Activated naive CD4-positive, alpha-beta T cell treated with anti-CD3 and anti-CD28 coated beads for 36 hours (primary cell): ENCODE measurements at regions of chr2 and their contacts with region 1.

Region 1: GRCh38 chr2:230472621-230473018 is 56.6 kb downstream of the SP100 start:
- DNase-seq: peak; percentile 79
- H3K4me3 Mint-ChIP-seq: peak overlapping the region; percentile 1
- H3K27ac Mint-ChIP-seq: peak overlapping the region; percentile 74
- H3K4me1 Mint-ChIP-seq: peaks cover 31% of the 10 kb centered on the region
- H3K27me3 Mint-ChIP-seq: no peaks in the 10 kb centered on the region

Region 2: GRCh38 chr2:230447455-230448451 is 24.9 kb before region 1 on chr2:
- CTCF ChIA-PET with region 1: no interaction called
- intact Hi-C with region 1: loop called (anchors 1 kb)
- DNase-seq: peak; percentile 60
- H3K4me3 Mint-ChIP-seq: peak overlapping the region; percentile 44
- H3K27ac Mint-ChIP-seq: peak overlapping the region; percentile 89
- H3K4me1 Mint-ChIP-seq: peaks cover 50% of the 10 kb centered on the region
- H3K27me3 Mint-ChIP-seq: no peaks in the 10 kb centered on the region

Region 3: DNA sequence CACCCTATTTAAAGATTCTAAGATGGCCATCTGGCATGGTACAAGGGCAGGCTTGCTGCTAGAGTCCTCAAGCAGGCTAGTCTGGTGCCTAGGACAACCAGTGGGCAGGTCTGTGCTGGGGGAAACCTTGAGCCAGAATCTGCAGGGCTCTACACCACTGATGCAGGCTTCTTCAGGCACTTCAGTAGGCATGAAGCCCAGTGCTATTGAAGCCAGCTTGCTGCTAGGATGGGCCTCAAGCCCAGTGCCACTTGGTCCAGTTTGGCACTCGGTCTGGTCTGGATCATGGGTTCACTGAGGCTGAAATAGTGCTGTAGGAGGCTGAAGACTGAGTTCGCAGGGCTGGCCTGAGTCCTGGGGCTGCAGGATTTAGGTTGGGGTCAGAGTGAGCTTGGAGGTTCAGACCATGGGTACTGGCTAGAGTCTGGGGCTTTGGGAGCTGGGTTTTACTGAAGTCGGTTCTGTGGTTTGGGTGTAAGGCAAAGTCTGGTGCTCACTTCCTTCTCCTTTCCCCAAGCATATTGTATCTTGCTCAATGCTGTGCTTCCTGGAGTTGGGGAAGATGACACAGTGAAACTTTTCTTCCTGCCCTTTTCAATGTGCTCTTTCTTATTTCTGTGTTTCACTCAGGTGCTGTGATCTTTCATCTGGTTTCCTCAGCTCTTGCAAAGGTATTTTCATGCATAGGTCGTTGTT is 15.4 kb before region 1 on chr2:
- CTCF ChIA-PET with region 1: interaction called, 3 read pairs
- intact Hi-C with region 1: loop called (anchors 1 kb)
- DNase-seq: peak; percentile 20
- H3K4me3 Mint-ChIP-seq: no peak overlapping the region
- H3K27ac Mint-ChIP-seq: peak overlapping the region; percentile 48
- H3K4me1 Mint-ChIP-seq: peaks cover 60% of the 10 kb centered on the region
- H3K27me3 Mint-ChIP-seq: no peaks in the 10 kb centered on the region

Region 4: GRCh38 chr2:230505162-230505561 is 32.5 kb after region 1 on chr2:
- CTCF ChIA-PET with region 1: no interaction called
- intact Hi-C with region 1: loop called (anchors 2 kb)
- DNase-seq: no peak
- H3K4me3 Mint-ChIP-seq: no peak overlapping the region
- H3K27ac Mint-ChIP-seq: no peak overlapping the region
- H3K4me1 Mint-ChIP-seq: peaks cover 9% of the 10 kb centered on the region
- H3K27me3 Mint-ChIP-seq: no peaks in the 10 kb centered on the region

Region 5: GRCh38 chr2:230537531-230537976 is 64.9 kb after region 1 on chr2:
- CTCF ChIA-PET with region 1: no interaction called
- intact Hi-C with region 1: loop called (anchors 2 kb)
- DNase-seq: peak; percentile 70
- H3K4me3 Mint-ChIP-seq: no peak overlapping the region
- H3K27ac Mint-ChIP-seq: no peak overlapping the region
- H3K4me1 Mint-ChIP-seq: peaks cover 15% of the 10 kb centered on the region
- H3K27me3 Mint-ChIP-seq: no peaks in the 10 kb centered on the region

Region 6: GRCh38 chr2:230798769-230799399 is 326.3 kb after region 1 on chr2:
- CTCF ChIA-PET with region 1: no interaction called
- intact Hi-C with region 1: no loop called
- DNase-seq: peak; percentile 72
- H3K4me3 Mint-ChIP-seq: no peak overlapping the region
- H3K27ac Mint-ChIP-seq: no peak overlapping the region
- H3K4me1 Mint-ChIP-seq: peaks cover 14% of the 10 kb centered on the region
- H3K27me3 Mint-ChIP-seq: no peaks in the 10 kb centered on the region